BJ (cell line): ENCODE measurements at regions of chr15 and their contacts with region 1.

Region 1: DNA sequence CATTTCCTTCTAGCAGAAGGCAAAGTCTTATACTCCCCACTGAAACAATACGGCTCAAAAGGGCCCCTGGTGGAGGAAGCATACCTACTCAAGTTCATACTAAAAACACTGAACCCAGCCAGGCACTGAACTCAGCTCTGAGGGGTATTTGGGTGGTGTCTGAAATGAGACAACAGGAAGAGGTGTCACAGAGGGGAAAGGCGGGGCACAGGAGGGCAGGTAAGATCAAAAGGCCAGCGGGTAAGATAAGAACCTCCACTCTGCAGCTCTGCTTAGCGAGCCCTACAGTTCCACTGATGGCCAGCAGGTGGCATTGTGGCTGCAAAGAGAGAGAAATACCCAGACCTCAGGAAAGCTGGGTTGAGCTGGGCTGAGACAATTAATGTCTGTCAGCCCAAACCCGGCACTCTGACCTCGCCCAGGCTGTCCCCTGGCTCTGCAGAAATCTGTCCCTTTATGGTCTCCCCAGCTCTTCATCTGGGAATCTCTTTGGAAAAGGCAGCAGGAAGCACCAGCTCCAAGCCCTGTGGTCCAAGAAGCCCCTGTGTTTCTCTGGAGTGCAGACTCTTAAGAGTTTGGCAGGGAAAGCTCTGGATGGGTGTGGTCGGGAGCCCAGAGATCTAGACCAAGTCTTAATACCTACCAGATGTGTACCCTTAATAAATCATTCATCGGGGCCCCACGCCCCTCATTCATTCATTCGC is 8.4 kb downstream of the MFGE8 start:
- DNase-seq: peak; percentile 56
- H3K4me3 ChIP-seq: no peak overlapping the region
- H3K27me3 ChIP-seq: no peaks in the 10 kb centered on the region
- CTCF ChIP-seq: peak; percentile 98

Region 2: DNA sequence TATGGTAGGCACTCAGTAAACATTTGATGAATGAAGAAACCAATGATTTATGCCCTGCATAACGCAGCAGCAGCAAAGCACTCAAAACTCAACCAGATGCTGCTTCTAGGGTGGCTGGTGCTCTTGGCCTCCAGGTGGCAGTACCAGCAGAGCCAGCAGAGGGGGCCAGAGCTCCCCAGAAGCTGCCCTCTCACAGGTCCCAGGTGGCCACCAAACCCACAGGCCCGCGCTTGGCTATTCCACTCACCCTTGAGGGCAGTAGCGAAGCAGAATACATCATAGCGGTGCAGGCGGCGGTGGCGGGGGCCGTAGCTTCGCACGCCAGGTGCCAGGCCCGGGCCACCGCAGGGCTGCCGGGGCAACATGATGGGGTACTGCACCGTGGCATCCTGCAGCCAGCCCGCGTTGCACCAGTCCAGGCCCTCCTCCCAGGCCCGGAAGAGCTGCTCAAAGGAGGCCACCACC is 26.0 kb before region 1 on chr15:
- CTCF ChIA-PET with region 1: interaction called, 20 read pairs
- POLR2A ChIA-PET with region 1: no interaction called
- DNase-seq: no peak
- H3K4me3 ChIP-seq: no peak overlapping the region
- H3K27me3 ChIP-seq: no peaks in the 10 kb centered on the region
- CTCF ChIP-seq: peak; percentile 91

Region 3: DNA sequence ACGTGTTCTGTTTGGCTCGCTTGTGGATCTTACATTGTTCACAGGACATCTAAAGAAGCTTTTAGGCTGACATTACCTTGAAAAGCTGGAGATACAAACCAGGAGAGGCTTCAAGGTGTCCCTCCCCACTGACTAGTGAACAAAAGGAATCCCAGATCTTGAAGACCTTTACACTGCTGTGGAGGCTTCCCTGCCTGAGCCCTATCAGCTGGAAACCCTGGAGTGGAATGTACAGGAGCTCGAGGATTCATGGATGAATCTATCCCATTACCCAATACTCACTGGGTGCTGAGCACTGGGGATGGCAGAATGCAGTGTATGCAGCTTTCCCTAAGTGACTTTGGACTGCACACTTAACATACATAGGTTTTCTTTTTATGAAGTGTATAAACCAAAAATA is 90.7 kb after region 1 on chr15:
- CTCF ChIA-PET with region 1: interaction called, 38 read pairs
- POLR2A ChIA-PET with region 1: no interaction called
- DNase-seq: no peak
- H3K4me3 ChIP-seq: no peak overlapping the region
- H3K27me3 ChIP-seq: no peaks in the 10 kb centered on the region
- CTCF ChIP-seq: no peak

Region 4: DNA sequence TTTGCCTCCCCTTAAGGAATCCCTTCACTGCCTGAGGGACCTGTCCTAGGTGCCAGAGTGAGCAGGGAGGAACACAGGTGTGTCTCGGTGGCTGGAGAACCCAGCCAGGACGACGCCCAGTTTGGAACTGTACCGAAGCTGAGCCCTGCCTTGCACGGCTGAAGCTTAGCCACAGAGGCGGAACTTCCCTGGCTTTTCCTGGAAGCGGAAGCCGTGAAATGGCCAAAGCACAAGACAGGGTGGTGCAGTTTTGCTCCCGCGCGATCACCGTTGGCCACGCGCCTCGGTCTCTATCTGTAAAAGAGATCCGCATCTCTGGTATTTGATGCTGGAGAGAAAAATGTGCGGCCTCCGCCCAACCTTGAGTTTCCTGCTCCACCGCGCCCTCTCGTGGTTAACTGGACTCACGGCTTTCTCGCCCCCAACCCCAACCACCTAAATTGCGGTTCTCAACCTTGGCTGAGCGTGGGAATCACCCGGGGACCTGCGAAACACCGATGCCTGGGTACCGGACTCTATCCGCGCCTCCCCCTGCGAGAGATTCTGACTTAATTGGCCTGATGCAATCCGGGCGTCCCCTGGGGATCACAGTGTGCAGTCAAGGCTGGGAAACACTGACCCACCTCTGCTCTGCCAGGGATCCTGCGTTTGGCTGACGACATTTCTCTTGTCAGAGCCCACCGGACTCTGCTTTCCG is 112.7 kb after region 1 on chr15:
- CTCF ChIA-PET with region 1: interaction called, 63 read pairs
- POLR2A ChIA-PET with region 1: no interaction called
- DNase-seq: no peak
- H3K4me3 ChIP-seq: peak overlapping the region; percentile 7; the same call in 1 of the 2 replicates
- H3K27me3 ChIP-seq: no peaks in the 10 kb centered on the region
- CTCF ChIP-seq: peak; percentile 94

Region 5: DNA sequence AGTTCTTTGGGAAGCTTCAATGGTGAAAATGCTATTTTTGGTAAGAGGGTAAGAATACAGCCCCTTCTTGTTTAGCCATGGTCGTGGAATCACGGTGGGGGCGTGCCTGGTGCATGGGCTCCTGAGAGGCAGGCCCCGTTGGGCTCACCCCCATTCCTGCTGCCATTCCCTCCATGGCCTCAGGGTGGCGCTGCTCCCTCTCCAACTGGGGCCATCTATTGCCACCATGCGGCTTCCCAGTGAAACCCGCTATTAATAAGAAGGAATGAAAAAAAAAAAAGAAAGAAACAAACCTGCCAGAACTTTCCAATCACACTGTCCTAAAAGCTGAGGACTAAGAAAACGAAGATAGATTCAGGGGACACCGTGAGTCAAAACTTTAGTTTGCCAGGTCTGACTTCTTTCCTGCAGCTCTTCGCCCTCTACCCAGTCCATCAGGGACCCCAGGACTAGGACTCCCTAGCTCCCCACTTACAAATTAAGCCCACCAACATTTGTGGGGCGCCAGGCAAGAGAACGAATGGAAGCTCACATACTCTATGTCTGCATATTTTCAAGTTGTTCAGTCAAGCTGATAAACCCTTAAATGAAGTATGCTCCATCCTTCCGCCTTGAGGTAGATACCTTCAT is 152.8 kb after region 1 on chr15:
- CTCF ChIA-PET with region 1: interaction called, 12 read pairs
- POLR2A ChIA-PET with region 1: no interaction called
- DNase-seq: peak; percentile 6
- H3K4me3 ChIP-seq: no peak overlapping the region
- H3K27me3 ChIP-seq: no peaks in the 10 kb centered on the region
- CTCF ChIP-seq: peak; percentile 98

Region 6: DNA sequence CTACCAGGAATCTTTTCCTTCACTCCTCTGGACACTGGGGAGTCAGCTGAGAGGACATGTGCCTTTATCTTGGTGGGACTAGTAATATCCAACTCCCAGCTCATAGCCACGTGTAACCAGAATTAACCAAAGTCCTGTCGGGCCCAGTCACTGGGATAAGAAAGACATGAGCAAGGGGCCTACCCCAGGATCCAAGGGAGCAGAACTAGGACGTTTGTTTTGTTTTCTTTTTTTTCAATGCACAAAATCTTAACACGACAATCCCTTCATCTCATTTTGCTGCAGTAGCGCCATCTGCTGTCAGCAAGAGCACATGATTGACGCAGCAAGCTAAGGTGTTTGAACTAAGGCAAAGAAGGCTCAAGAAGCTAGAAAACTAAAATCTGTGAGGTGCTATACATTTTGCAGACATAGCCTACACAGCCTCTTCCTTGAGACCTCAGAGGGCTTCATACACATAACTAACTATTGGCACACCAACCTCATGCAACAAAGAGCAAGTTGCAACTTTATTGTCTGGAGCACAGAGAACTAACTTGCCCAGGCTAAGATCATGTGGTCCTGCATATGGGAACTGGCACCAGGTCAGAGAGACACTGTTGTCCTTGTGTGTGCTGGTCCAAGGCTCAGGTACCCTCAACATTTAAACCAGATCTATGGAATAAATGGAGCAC is 273.0 kb after region 1 on chr15:
- CTCF ChIA-PET with region 1: interaction called, 27 read pairs
- POLR2A ChIA-PET with region 1: interaction called, 4 read pairs
- DNase-seq: peak; percentile 21
- H3K4me3 ChIP-seq: no peak overlapping the region
- H3K27me3 ChIP-seq: no peaks in the 10 kb centered on the region
- CTCF ChIP-seq: peak; percentile 86